ENCODE measurements at regions of chr5 and their contacts with region 1.

Region 1: DNA sequence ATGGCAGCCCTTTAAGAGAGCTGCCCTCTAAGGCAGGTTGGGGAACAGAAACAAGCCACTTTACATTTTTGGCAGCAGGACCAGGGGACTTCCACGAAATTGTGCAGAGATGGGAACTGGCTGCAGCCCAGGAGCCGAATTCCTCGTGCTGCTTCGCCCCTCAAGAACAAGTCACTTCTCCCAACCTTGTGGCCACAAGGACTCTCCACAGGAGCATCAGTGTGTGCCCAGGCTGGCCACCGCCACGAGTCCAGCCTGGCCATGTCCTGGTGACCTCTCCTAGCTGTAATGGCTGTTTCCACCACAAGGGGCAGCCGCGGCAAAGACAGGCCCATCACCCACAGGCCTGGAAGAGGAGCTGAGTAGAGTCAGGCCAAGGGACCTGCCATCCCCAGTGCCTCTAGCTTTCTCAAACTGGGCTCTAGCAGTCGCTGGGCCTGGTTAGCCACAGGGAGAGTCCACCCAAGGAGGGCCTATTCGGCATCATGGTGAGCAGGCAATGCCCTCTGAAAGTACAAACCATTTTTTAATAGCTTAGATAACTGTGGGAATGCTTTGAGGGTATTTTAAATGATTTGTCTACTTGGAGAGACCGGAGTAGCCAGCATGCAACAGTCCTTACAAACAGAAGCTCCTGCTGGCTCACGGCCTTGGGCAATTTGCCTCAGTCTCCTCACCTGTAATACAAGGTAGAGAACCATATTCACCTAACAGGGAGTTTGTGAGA is 129.0 kb downstream of the COL23A1 start:
- DNase-seq: peak; percentile 39 to 96
- H3K4me3 ChIP-seq: no peak overlapping the region
- H3K27ac ChIP-seq: no peak overlapping the region
- H3K4me1 ChIP-seq: peaks cover 0 to 13% (median 8%) of the 10 kb centered on the region in 4 experiments; a peak in 5 of 7 replicates
- H3K27me3 ChIP-seq: no peaks in the 10 kb centered on the region
- CTCF ChIP-seq: peak in 2 of 3 experiments; percentile 87 to 97; a peak in 3 of 4 replicates
- EP300 ChIP-seq: no peak
- POLR2A ChIP-seq: no peak
- RAD21 ChIP-seq: peak; percentile 87 to 91

Region 2: DNA sequence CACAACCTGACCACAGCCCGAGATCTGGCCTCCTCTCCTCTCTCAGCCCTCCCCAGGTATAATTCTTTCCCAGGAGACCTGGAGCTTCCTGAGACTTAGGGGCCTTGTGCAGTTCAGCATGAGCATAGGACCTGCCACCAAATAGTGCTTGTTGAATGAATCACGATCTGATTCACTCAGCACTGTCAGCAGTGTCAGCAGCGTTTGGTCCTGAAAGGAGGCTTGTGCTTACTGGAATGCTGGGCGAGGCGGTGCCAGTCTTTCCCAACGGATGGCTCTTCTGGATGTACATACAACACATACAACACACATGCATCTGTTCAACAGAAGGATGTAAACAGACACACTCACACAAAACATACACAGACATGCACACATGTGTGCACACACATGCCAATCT is 44.2 kb before region 1 on chr5:
- CTCF ChIA-PET with region 1: interaction called, 14 read pairs
- POLR2A ChIA-PET with region 1: no interaction called
- DNase-seq: no peak
- H3K4me3 ChIP-seq: no peak overlapping the region
- H3K27ac ChIP-seq: no peak overlapping the region
- H3K4me1 ChIP-seq: peaks cover 11 to 33% (median 19%) of the 10 kb centered on the region in 4 experiments
- H3K27me3 ChIP-seq: no peaks in the 10 kb centered on the region
- CTCF ChIP-seq: no peak
- EP300 ChIP-seq: no peak
- POLR2A ChIP-seq: no peak
- RAD21 ChIP-seq: no peak

Region 3: DNA sequence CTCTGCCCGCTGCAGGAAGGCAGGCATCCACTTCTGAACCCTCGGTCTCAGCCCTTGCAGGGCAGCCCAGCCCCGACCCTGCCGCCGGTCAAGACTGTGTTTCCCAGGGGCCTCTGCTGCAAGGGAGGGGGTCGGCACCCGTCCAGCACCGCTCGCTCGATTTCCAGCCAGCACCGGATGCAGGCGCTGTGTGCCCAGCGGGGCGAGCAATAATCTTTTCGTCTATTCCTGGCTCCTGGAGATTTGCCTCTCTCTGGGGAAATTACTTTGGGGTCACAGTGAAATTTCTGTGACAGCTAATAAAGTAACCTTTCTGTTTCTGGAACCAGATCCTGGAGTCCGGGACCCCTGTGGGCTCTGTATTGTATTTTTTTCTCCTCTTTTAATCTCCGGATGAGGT is 26.3 kb before region 1 on chr5:
- CTCF ChIA-PET with region 1: interaction called, 19 read pairs
- POLR2A ChIA-PET with region 1: no interaction called
- DNase-seq: no peak
- H3K4me3 ChIP-seq: no peak overlapping the region
- H3K27ac ChIP-seq: no peak overlapping the region
- H3K4me1 ChIP-seq: peaks cover 0 to 4% (median 0%) of the 10 kb centered on the region in 4 experiments; a peak in 1 of 7 replicates
- H3K27me3 ChIP-seq: no peaks in the 10 kb centered on the region
- CTCF ChIP-seq: no peak
- EP300 ChIP-seq: no peak
- POLR2A ChIP-seq: no peak
- RAD21 ChIP-seq: no peak

Region 4: GRCh38 chr5:178483620-178484019 is 22.5 kb after region 1 on chr5:
- CTCF ChIA-PET with region 1: interaction called, 15 read pairs
- POLR2A ChIA-PET with region 1: no interaction called
- DNase-seq: no peak
- H3K4me3 ChIP-seq: no peak overlapping the region
- H3K27ac ChIP-seq: no peak overlapping the region
- H3K4me1 ChIP-seq: peaks cover 0 to 11% (median 7%) of the 10 kb centered on the region in 4 experiments; a peak in 4 of 7 replicates
- H3K27me3 ChIP-seq: no peaks in the 10 kb centered on the region; a peak in 1 of 7 replicates
- CTCF ChIP-seq: no peak
- EP300 ChIP-seq: no peak
- POLR2A ChIP-seq: no peak
- RAD21 ChIP-seq: no peak

Region 5: GRCh38 chr5:178551059-178551458 is 89.9 kb after region 1 on chr5:
- CTCF ChIA-PET with region 1: interaction called, 42 read pairs
- POLR2A ChIA-PET with region 1: no interaction called
- DNase-seq: no peak
- H3K4me3 ChIP-seq: no peak overlapping the region
- H3K27ac ChIP-seq: no peak overlapping the region
- H3K4me1 ChIP-seq: peaks cover 2 to 14% (median 6%) of the 10 kb centered on the region in 4 experiments
- H3K27me3 ChIP-seq: peaks cover 0 to 2% (median 0%) of the 10 kb centered on the region in 4 experiments; a peak in 2 of 7 replicates
- CTCF ChIP-seq: peak in 1 of 3 experiments; percentile 2; a peak in 2 of 4 replicates
- EP300 ChIP-seq: no peak
- POLR2A ChIP-seq: no peak
- RAD21 ChIP-seq: peak in 1 of 2 experiments; percentile 33; a peak in 3 of 4 replicates

Region 6: DNA sequence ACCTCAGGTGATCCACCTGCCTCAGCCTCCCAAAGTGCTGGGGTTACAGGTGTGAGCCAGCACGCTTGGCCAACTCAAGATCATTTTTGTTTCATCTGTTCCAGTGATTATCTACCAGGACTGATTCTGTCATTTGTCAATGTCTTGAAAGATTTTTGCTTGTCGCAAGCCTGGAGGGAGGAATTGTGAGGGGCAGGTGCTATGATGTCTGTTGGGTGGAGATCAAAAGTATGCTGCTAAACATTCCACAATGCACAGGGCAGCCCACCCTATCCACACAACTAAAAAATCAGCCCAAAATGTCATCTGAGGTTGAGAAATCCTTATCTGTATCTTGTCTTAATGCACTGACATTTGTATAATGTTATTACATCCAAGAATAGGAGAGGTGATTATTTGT is 419.9 kb after region 1 on chr5:
- CTCF ChIA-PET with region 1: no interaction called
- POLR2A ChIA-PET with region 1: no interaction called
- DNase-seq: no peak
- H3K4me3 ChIP-seq: no peak overlapping the region
- H3K27ac ChIP-seq: no peak overlapping the region
- H3K4me1 ChIP-seq: no peaks in the 10 kb centered on the region
- H3K27me3 ChIP-seq: no peaks in the 10 kb centered on the region
- CTCF ChIP-seq: no peak
- EP300 ChIP-seq: no peak
- POLR2A ChIP-seq: no peak
- RAD21 ChIP-seq: no peak

Measured in H1 (cell line).